ENCODE measurements at regions of chr14 and their contacts with region 1.

Region 1: GRCh38 chr14:53953002-53953827 is 3.4 kb downstream of the BMP4 start:
- DNase-seq: peak; percentile 60 to 68
- ATAC-seq: peak; percentile 53 to 57
- H3K4me3 ChIP-seq: peak overlapping the region; percentile 60 to 68 (median 66)
- H3K27ac ChIP-seq: peak overlapping the region; percentile 77 to 84 (median 80)
- H3K4me1 ChIP-seq: peaks cover 4 to 35% of the 10 kb centered on the region in 2 donors
- H3K27me3 ChIP-seq: peaks cover 44 to 76% (median 54%) of the 10 kb centered on the region in 3 donors
- CTCF ChIP-seq: no peak
- POLR2A ChIP-seq: peak; percentile 73 to 83

Region 2: DNA sequence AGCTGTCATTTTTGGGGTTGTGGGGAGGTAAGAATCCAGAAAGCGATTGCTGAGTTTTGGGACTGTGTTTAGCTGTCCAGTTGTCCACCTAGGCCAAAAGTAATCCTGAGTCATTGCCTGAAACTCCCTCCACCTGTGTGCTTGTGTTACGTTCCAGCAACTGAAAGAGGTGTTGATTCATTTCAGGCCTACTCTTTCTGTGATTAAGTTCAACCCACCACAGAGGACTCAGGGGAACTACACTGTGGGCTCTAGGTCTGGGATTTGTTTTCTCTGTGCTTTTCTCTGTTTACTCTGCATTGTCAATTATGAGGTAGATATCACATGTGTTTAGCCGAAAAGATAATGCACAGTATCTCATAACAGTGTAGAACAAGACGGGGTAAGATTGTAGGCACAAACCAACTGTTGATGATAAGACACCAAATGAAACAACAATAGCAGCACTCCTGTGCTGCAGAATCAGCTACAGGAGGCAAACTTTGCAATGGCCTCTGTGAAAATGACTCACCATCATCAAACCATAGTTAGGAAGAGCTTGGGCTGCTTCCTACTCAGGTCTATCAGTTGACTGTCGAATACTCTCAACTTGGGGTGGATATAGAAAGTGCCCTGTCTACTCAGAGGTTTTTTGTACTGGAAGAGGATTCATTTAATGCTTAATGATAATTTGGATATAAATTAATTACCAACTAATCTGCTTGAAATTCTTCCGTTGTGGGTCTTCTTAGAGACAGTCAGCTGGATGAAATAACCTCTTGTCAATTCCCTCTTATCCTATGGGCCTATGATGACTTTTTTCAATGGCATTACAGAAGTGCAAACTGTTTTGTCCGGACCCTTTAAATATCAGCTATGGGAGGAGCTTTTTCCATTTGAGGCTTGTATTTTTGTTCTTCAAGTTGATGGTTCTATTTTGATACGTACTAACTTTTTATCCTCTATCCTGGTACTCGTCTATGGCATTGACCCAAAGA is 382.5 kb before region 1 on chr14:
- in situ Hi-C with region 1: no loop called
- intact Hi-C with region 1: no loop called
- DNase-seq: no peak
- ATAC-seq: no peak
- H3K4me3 ChIP-seq: no peak overlapping the region
- H3K27ac ChIP-seq: no peak overlapping the region
- H3K4me1 ChIP-seq: no peaks in the 10 kb centered on the region
- H3K27me3 ChIP-seq: no peaks in the 10 kb centered on the region
- CTCF ChIP-seq: no peak
- POLR2A ChIP-seq: no peak

Region 3: GRCh38 chr14:53630336-53630735 is 322.9 kb before region 1 on chr14:
- in situ Hi-C with region 1: no loop called
- intact Hi-C with region 1: loop called (anchors 10 kb)
- DNase-seq: no peak
- ATAC-seq: no peak
- H3K4me3 ChIP-seq: no peak overlapping the region
- H3K27ac ChIP-seq: no peak overlapping the region
- H3K4me1 ChIP-seq: no peaks in the 10 kb centered on the region
- H3K27me3 ChIP-seq: no peaks in the 10 kb centered on the region
- CTCF ChIP-seq: no peak
- POLR2A ChIP-seq: no peak

Region 4: GRCh38 chr14:53715193-53715721 is 238.0 kb before region 1 on chr14:
- in situ Hi-C with region 1: no loop called
- intact Hi-C with region 1: loop called (anchors 10 kb)
- DNase-seq: no peak
- ATAC-seq: peak in 1 of 2 donors; percentile 60
- H3K4me3 ChIP-seq: peak overlapping the region in 3 of 4 donors; percentile 3 to 31 (median 4)
- H3K27ac ChIP-seq: peak overlapping the region; percentile 11 to 42 (median 30)
- H3K4me1 ChIP-seq: peaks cover 6 to 8% of the 10 kb centered on the region in 2 donors
- H3K27me3 ChIP-seq: no peaks in the 10 kb centered on the region
- CTCF ChIP-seq: no peak
- POLR2A ChIP-seq: no peak

Region 5: DNA sequence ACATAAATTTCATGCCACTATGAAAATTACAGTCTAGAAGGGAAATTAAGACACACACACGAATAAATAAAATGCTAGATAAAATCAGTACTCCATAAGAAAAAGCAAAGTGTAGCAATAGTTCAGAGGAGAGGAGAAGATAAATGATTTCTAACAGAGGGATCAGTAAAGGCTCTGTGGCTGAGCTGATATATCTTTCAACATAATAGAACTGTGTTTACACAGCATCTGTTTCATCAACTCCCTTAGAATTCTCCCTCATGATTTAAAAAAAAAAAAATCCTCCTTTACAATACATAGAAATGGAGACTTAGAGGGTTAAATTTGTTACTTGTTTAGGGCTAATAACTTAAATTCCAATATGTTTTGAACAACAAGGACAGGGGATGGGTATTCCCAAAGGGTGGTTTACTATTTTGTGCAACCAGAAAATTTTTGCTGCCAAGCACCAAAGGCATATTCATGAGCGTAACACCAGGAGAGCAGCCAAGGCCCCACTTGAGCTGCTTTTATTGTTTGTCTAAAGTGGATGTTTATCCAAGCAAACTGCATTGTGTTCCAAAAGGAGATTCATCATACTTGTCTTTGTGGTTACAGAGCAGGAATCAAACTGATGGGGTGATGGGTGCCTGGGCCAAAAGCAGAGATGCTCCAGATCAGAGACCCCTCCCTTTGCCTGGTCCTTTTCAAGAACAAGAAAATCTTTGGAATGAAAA is 159.3 kb before region 1 on chr14:
- in situ Hi-C with region 1: no loop called
- intact Hi-C with region 1: loop called (anchors 10 kb)
- DNase-seq: peak; percentile 7 to 42
- ATAC-seq: peak; percentile 58 to 80
- H3K4me3 ChIP-seq: no peak overlapping the region
- H3K27ac ChIP-seq: peak overlapping the region in 1 of 4 donors; percentile 23
- H3K4me1 ChIP-seq: no peaks in the 10 kb centered on the region
- H3K27me3 ChIP-seq: no peaks in the 10 kb centered on the region
- CTCF ChIP-seq: no peak
- POLR2A ChIP-seq: no peak

Region 6: DNA sequence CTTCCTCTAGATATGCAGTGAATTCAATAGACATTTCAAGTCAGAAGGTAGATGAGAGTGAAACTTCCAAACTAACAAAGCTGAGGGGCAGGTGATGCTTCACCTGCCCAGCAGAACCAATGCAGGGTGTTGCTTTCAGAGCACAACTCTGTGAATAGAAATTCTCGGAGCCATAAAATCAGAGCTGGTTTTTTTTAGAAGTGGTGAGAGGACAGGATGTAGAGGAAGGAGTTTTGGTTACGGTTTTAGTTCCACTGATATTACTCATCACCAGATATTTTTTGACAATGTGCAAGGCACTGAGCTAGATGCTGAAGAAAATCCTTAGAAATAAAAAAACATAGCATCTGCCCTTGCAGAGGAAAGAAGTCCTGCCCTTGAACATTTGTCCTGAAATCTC is 58.8 kb before region 1 on chr14:
- in situ Hi-C with region 1: no loop called
- intact Hi-C with region 1: loop called (anchors 10 kb)
- DNase-seq: no peak
- ATAC-seq: no peak
- H3K4me3 ChIP-seq: no peak overlapping the region
- H3K27ac ChIP-seq: no peak overlapping the region
- H3K4me1 ChIP-seq: no peaks in the 10 kb centered on the region
- H3K27me3 ChIP-seq: no peaks in the 10 kb centered on the region
- CTCF ChIP-seq: no peak
- POLR2A ChIP-seq: no peak

Measured in gastrocnemius medialis (tissue), 4 donors.